ENCODE measurements at regions of chr3 and their contacts with region 1.

Region 1: DNA sequence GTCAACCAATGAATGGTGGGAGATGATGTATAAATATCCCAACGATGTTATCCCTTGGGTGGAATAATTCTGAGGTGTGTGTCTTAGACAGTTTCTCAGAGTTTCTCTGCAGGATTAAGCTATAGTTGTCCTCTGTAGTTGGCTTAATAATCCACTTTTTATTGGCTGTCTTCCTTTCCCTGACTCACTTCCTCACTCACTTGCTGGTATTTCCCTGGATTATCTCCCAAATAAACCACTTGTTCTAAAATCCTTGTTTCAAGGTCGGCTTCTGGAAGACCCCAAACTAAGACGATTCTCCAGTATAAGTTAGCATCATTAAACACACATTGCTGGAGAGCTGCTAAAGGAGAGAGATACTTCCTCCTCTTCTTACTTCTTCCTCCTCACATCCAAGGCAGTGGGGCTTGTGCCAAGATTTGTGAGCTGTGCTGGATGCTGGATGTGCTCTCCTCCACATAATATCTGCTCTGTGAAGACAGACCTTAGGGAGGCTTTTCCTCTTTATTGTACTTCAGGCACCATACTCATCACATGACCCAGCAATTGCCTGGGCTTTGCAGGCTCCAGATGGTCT is 22.5 kb upstream of the ROPN1 start:
- DNase-seq: no peak
- ATAC-seq: peak in 1 of 4 donors; percentile 22
- H3K4me3 ChIP-seq: no peak overlapping the region
- H3K27ac ChIP-seq: no peak overlapping the region
- H3K4me1 ChIP-seq: peaks cover 0 to 15% (median 0%) of the 10 kb centered on the region in 12 donors
- H3K27me3 ChIP-seq: no peaks in the 10 kb centered on the region
- CTCF ChIP-seq: no peak
- POLR2A ChIP-seq: no peak

Region 2: DNA sequence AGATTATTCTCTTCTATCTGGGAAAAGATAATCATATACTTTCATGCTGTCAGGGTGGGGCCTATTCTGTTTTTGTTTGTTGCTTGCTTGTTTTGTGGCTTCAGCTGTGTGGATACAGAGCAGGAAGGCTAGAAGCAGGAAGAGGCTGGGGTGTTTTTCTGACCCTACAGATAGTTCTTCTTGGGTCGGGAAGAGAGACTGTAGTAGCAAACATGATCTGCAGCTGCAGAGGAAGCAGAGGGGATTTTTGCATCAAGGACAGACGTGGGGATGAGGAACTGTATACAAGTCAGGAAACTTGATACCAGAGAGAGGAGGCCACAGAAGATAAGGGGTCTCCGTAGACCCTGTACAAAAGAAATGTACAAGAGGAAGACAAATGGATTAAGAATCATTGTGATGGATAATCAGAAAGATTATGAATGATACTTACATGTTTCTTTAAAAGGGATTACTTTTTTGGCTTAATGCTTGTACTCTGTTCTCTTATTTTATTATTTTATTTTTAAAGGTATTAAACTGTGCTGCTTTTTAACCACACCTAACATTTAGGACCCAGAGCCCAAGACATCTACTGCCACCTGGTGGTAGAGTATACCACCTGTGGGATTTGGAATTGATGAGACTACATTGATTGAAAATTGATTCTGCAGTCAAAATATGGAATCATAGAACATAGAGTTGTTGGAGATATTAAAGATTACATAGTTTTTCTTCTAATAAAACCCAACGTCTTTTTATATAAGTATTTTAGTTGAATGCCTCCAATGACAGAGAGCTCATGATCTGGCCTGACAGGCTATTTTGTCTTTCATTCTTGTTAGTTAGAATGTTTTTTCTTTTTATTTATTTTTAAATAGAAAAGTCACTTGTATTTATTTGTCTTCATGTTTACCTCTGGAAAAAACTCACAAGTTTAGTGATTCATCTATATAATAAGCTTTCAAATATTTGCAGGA is 64.8 kb after region 1 on chr3:
- intact Hi-C with region 1: loop called (anchors 1 to 5 kb)
- DNase-seq: no peak
- ATAC-seq: peak in 2 of 4 donors; percentile 53 to 59
- H3K4me3 ChIP-seq: no peak overlapping the region
- H3K27ac ChIP-seq: peak overlapping the region in 4 of 12 donors; percentile 13 to 43 (median 28)
- H3K4me1 ChIP-seq: peaks cover 0 to 58% (median 30%) of the 10 kb centered on the region in 12 donors
- H3K27me3 ChIP-seq: no peaks in the 10 kb centered on the region
- CTCF ChIP-seq: peak; percentile 65 to 88 (median 82)
- POLR2A ChIP-seq: no peak

Region 3: GRCh38 chr3:124467980-124468902 is 453.8 kb after region 1 on chr3:
- intact Hi-C with region 1: loop called in 9 of 10 experiments (anchors 1 to 5 kb)
- DNase-seq: peak; percentile 15 to 65 (median 28)
- ATAC-seq: peak; percentile 62 to 79 (median 74)
- H3K4me3 ChIP-seq: no peak overlapping the region
- H3K27ac ChIP-seq: no peak overlapping the region
- H3K4me1 ChIP-seq: no peaks in the 10 kb centered on the region
- H3K27me3 ChIP-seq: no peaks in the 10 kb centered on the region
- CTCF ChIP-seq: peak; percentile 84 to 98 (median 93)
- POLR2A ChIP-seq: no peak

Region 4: GRCh38 chr3:124559881-124560574 is 545.6 kb after region 1 on chr3:
- intact Hi-C with region 1: loop called in 4 of 10 experiments (anchors 10 kb)
- DNase-seq: peak in 4 of 5 donors; percentile 50 to 69 (median 64)
- ATAC-seq: peak; percentile 57 to 79 (median 71)
- H3K4me3 ChIP-seq: no peak overlapping the region
- H3K27ac ChIP-seq: peak overlapping the region in 5 of 12 donors; percentile 17 to 41 (median 20)
- H3K4me1 ChIP-seq: peaks cover 4 to 38% (median 17%) of the 10 kb centered on the region in 12 donors
- H3K27me3 ChIP-seq: no peaks in the 10 kb centered on the region
- CTCF ChIP-seq: peak; percentile 80 to 94 (median 88)
- POLR2A ChIP-seq: no peak

Measured in heart left ventricle (tissue), 16 donors.